K562 (cell line): ENCODE measurements at regions of chr17 and their contacts with region 1.

Region 1: GRCh38 chr17:4249452-4250029 is 14.2 kb downstream of the ANKFY1 start:
- DNase-seq: peak; percentile 54 to 90 (median 74)
- ATAC-seq: peak; percentile 97
- H3K4me3 ChIP-seq: no peak overlapping the region
- H3K27ac ChIP-seq: peak overlapping the region; percentile 79
- H3K4me1 ChIP-seq: peaks cover 8 to 37% of the 10 kb centered on the region in 2 experiments; a peak in 4 of 5 replicates
- H3K27me3 ChIP-seq: no peaks in the 10 kb centered on the region
- CTCF ChIP-seq: peak; percentile 53 to 70 (median 64)
- EP300 ChIP-seq: peak; percentile 86
- POLR2A ChIP-seq: no peak
- RAD21 ChIP-seq: peak; percentile 14 to 31; a peak in 3 of 4 replicates

Region 2: DNA sequence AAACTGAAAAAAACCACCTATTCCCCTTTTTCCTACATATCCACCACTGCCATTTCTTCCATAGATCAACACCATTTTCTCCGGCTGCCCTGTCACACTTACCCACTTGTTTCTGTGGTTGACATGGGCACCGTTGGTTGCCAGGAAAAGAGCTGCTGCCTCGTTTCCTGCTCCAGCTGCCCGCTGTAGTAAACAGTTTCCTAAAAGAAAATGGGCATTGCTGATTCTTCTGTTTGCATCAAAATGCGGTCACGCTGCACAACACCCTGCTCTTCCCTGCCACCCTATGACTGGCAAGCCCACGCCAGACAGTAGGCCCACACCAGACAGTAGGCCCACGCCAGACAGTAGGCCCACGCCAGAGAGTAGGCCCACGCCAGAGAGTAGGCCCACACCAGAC is 60.3 kb before region 1 on chr17:
- CTCF ChIA-PET with region 1: no interaction called
- POLR2A ChIA-PET with region 1: no interaction called
- in situ Hi-C with region 1: no loop called
- intact Hi-C with region 1: no loop called
- DNase-seq: no peak
- ATAC-seq: no peak
- H3K4me3 ChIP-seq: no peak overlapping the region
- H3K27ac ChIP-seq: no peak overlapping the region
- H3K4me1 ChIP-seq: no peaks in the 10 kb centered on the region
- H3K27me3 ChIP-seq: no peaks in the 10 kb centered on the region
- CTCF ChIP-seq: no peak
- EP300 ChIP-seq: no peak
- POLR2A ChIP-seq: no peak
- RAD21 ChIP-seq: no peak

Region 3: GRCh38 chr17:4263282-4264215 is 14.0 kb after region 1 on chr17 and contains the start of gene ANKFY1:
- CTCF ChIA-PET with region 1: no interaction called
- POLR2A ChIA-PET with region 1: interaction called, 31 read pairs
- in situ Hi-C with region 1: no loop called
- intact Hi-C with region 1: no loop called
- DNase-seq: peak; percentile 91 to 95 (median 92)
- ATAC-seq: peak; percentile 97
- H3K4me3 ChIP-seq: peak within 1 kb of the TSS; percentile 86
- H3K27ac ChIP-seq: peak within 1 kb of the TSS; percentile 72
- H3K4me1 ChIP-seq: peaks cover 12 to 16% of the 10 kb centered on the region in 2 experiments; a peak in 4 of 5 replicates
- H3K27me3 ChIP-seq: no peaks in the 10 kb centered on the region
- CTCF ChIP-seq: peak in 2 of 3 experiments; percentile 25 to 48; a peak in 4 of 6 replicates
- EP300 ChIP-seq: no peak
- POLR2A ChIP-seq: peak; percentile 84
- RAD21 ChIP-seq: no peak
- polyA plus RNA-seq, gene ANKFY1: 4.3 to 4.6 TPM

Region 4: DNA sequence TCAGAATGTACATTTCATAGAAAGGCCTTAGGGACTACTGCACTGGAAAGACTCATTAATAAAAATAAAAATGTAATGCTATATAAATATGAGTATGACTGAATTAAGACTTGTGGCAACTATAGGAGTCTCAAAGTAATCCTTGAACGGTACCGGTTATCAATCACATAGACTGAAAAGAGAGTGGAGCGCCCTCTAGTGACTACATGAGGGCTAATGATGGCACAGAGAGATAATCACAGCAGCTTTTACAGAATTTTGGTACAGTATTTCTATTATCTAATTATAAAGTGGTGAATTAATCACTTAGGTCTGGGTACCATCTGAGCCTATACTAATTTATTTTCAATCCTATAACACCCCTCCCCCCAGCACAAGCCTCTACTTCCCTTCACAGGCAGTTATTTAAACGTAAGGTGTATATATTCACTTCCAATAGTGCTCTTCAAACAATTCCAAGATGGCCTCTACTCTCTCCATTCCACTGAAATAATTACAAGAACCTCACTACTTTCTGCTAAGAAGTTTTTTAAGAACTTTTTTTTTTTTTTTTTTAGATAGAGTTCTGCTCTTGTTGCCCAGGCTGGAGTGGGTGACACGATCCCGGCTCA is 55.0 kb after region 1 on chr17:
- CTCF ChIA-PET with region 1: no interaction called
- POLR2A ChIA-PET with region 1: no interaction called
- in situ Hi-C with region 1: no loop called
- intact Hi-C with region 1: loop called (anchors 2 kb)
- DNase-seq: peak; percentile 55 to 66 (median 62)
- ATAC-seq: peak; percentile 77
- H3K4me3 ChIP-seq: no peak overlapping the region
- H3K27ac ChIP-seq: no peak overlapping the region
- H3K4me1 ChIP-seq: no peaks in the 10 kb centered on the region; a peak in 2 of 5 replicates
- H3K27me3 ChIP-seq: no peaks in the 10 kb centered on the region
- CTCF ChIP-seq: peak; percentile 47 to 65 (median 65); a peak in 5 of 6 replicates
- EP300 ChIP-seq: no peak
- POLR2A ChIP-seq: no peak
- RAD21 ChIP-seq: peak in 1 of 2 experiments; percentile 45; a peak in 2 of 4 replicates